Panc1 (cell line): ENCODE measurements at regions of chr9 and their contacts with region 1.

Region 1: GRCh38 chr9:114558027-114558662 is 29.4 kb upstream of the ATP6V1G1 start:
- DNase-seq: no peak
- ATAC-seq: no peak
- H3K4me3 ChIP-seq: no peak overlapping the region
- H3K27ac ChIP-seq: no peak overlapping the region
- H3K4me1 ChIP-seq: peaks cover 4% of the 10 kb centered on the region
- H3K27me3 ChIP-seq: no peaks in the 10 kb centered on the region
- CTCF ChIP-seq: no peak

Region 2: DNA sequence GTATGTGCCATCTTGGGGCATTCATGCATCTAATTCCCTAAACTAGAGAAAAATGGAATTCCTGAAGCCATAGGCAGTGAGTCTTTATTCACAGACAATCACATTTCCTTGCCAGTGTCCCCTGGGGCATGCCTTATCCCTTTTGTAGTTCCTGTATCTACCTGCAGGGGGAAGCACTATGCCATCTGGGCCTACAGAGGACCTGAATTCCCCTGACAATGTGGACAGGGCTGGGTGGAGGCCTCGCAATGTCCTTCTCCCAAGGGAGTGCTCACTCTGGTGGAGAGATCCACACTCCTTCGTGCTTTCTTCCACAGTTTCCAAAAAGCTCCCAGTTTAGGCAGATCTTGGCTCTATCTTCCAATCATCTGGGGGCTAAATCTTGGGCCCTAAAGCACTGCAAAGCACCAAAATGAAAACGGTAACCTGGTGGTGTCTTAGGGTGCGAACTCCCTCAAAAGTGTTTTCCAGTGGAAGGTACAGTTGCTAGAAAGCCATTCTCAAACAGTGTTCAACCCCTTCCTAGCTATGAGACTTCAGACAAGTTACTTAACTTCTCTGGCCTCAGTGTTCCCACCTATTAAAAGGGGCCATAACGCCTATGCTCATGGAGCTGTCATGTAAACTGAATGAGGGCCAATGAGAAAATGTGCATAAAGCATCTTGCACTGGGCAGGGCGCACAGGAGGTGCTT is 70.4 kb before region 1 on chr9:
- CTCF ChIA-PET with region 1: no interaction called
- POLR2A ChIA-PET with region 1: no interaction called
- in situ Hi-C with region 1: no loop called
- intact Hi-C with region 1: no loop called
- DNase-seq: peak; percentile 54
- ATAC-seq: peak; percentile 98
- H3K4me3 ChIP-seq: no peak overlapping the region
- H3K27ac ChIP-seq: no peak overlapping the region
- H3K4me1 ChIP-seq: no peaks in the 10 kb centered on the region
- H3K27me3 ChIP-seq: no peaks in the 10 kb centered on the region
- CTCF ChIP-seq: peak; percentile 85

Region 3: DNA sequence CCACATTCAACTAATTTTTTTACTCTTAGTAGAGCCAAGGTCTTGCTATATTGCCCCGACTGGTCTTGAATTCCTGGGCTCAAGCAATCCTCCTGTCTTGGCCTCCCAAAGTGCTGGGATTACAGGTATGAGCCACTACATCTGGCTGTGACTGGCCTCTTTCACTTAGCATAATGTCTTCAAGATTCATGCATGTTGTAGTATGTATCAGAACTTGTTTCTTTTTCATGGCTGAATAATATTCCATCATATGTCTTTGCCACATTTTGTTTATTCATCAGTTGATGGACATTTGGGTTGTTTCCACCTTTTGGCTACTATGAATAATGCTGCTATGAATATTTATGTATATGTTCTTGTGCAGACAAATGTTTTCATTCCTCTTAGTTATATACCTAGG is 40.0 kb before region 1 on chr9:
- CTCF ChIA-PET with region 1: no interaction called
- POLR2A ChIA-PET with region 1: interaction called, 17 read pairs
- in situ Hi-C with region 1: no loop called
- intact Hi-C with region 1: no loop called
- DNase-seq: no peak
- ATAC-seq: no peak
- H3K4me3 ChIP-seq: no peak overlapping the region
- H3K27ac ChIP-seq: no peak overlapping the region
- H3K4me1 ChIP-seq: no peaks in the 10 kb centered on the region
- H3K27me3 ChIP-seq: no peaks in the 10 kb centered on the region
- CTCF ChIP-seq: no peak

Region 4: GRCh38 chr9:114718801-114719221 is 160.7 kb after region 1 on chr9:
- CTCF ChIA-PET with region 1: no interaction called
- POLR2A ChIA-PET with region 1: no interaction called
- in situ Hi-C with region 1: no loop called
- intact Hi-C with region 1: no loop called
- DNase-seq: no peak
- ATAC-seq: no peak
- H3K4me3 ChIP-seq: no peak overlapping the region
- H3K27ac ChIP-seq: no peak overlapping the region
- H3K4me1 ChIP-seq: no peaks in the 10 kb centered on the region
- H3K27me3 ChIP-seq: no peaks in the 10 kb centered on the region
- CTCF ChIP-seq: no peak